ENCODE measurements at regions of chr12 and their contacts with region 1.

Region 1: DNA sequence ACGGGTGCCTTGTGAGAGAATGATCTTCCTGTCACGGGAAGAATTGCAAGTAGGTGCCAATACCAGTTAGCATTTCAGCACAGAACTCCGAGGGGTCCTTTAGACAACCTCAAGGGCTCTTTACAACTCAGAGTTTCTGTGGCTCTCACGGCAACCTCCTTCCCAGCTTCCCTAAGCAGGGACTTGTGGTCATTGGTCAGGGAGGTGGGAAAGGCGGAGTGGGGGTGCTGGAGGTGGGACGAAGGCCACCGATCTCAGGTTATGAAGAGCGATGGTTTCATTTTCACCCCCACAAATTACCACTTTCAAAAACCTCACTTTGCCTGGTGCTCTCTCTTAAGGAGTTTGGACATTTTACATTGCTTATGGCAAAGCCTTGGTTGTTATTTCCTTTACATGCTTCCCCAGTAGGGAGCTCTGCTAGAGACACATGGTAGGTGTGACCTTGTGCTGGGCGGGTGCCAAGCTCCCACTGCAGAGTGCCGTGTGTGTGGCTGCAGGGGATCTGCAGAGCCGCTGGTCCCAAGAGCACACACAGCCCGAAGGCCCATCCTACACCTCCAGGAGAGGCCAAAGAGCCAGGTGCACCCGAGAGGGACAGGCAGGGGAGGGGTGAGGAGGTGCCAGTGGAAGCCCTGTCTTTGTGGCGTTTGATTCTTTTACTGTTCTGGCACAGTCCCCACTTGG is 21.4 kb downstream of the BCL2L14 start:
- DNase-seq: no peak
- ATAC-seq: peak in 2 of 4 donors; percentile 15 to 55
- H3K4me3 ChIP-seq: no peak overlapping the region
- H3K27ac ChIP-seq: no peak overlapping the region
- H3K4me1 ChIP-seq: peaks cover 0 to 8% (median 0%) of the 10 kb centered on the region in 12 donors
- H3K27me3 ChIP-seq: no peaks in the 10 kb centered on the region
- CTCF ChIP-seq: no peak
- POLR2A ChIP-seq: no peak

Region 2: DNA sequence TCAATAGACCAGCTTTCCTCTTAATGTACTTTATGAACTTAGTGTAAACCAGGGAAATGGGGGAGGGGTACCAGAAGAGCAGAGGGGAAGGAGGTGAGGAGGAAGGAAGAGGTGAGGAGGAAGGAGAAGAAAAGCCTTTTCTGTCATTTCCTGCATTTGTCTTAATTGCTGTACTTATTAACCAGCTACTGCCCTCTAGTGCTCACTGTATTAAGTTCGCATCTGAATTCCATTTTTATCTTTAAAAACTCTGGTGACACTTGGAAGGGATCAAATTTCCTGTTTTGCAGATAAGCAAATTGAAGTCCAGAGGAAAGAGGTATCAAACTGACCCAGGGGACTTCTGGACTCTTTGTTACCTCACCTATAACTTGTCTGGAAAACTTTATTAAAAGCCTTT is 235.7 kb after region 1 on chr12:
- intact Hi-C with region 1: loop called in 2 of 10 experiments (anchors 2 to 5 kb)
- DNase-seq: no peak
- ATAC-seq: peak in 3 of 4 donors; percentile 41 to 57 (median 57)
- H3K4me3 ChIP-seq: no peak overlapping the region
- H3K27ac ChIP-seq: peak overlapping the region in 6 of 12 donors; percentile 0 to 63 (median 36)
- H3K4me1 ChIP-seq: peaks cover 0 to 12% (median 8%) of the 10 kb centered on the region in 12 donors
- H3K27me3 ChIP-seq: no peaks in the 10 kb centered on the region
- CTCF ChIP-seq: peak; percentile 45 to 84 (median 70)
- POLR2A ChIP-seq: no peak

Region 3: DNA sequence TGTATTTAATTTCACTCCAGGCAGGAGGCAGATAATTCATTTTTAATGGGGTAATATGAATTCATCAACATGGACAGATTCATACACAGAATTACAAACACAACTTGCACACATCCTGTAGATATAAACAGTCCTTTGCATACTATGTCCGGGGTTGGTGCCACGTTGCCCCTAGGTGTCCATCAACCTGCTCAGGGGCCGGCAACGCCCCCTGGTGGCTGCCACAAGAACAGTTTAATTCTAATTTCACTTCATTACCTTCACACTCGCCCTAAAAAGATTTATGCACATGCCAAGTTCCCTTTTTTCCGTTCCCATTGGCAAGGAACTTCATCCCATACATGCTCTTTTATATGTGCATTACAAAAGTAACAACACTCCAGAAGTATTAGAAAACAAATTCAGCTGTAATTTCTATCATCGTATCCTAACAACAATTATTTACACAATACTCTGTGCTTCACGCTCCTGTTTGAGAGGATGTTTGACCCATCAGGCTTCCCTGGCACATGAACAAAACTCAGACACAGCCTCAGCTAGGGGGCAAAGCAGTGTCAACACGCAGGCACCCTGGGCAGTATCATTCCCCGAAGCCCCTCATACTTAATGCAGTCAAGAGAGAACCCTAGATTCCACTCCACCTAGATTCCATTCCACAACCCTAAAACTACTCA is 242.4 kb after region 1 on chr12:
- intact Hi-C with region 1: loop called in 1 of 10 experiments (anchors 5 kb)
- DNase-seq: peak; percentile 35 to 67 (median 47)
- ATAC-seq: peak in 3 of 4 donors; percentile 50 to 66 (median 52)
- H3K4me3 ChIP-seq: no peak overlapping the region
- H3K27ac ChIP-seq: peak overlapping the region in 1 of 12 donors; percentile 53
- H3K4me1 ChIP-seq: peaks cover 0 to 25% (median 11%) of the 10 kb centered on the region in 12 donors
- H3K27me3 ChIP-seq: no peaks in the 10 kb centered on the region
- CTCF ChIP-seq: peak; percentile 76 to 94 (median 82)
- POLR2A ChIP-seq: no peak